ENCODE measurements at regions of chr3 and their contacts with region 1.

Region 1: DNA sequence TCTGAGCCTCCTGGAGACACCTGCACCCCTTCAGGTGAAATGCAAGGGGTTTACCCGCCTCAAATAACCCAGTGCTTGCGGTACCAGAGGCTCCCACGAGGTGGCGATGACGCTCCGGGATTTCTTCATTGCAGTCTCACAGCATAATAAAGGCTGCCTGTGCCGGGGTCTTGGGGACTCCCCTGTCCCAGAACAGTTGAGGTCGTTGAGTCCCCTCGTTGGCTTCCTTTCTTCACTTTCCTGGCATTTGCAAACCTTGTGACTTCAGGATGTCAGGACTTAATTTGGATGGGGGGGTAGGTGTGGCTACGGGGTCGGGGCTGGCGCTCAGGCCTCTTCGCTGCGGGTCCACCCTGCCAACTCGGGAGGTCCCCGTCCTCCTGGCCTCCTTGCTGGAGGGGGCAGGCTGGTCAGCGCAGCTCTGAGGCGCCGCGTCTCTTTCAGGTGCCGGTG is 1.3 kb downstream of the GNAT1 start:
- DNase-seq: peak; percentile 69 to 72
- H3K4me3 ChIP-seq: no peak overlapping the region
- H3K27ac ChIP-seq: no peak overlapping the region
- H3K4me1 ChIP-seq: peaks cover 0 to 7% of the 10 kb centered on the region in 2 donors
- H3K27me3 ChIP-seq: peaks cover 15 to 17% of the 10 kb centered on the region in 2 donors
- CTCF ChIP-seq: peak; percentile 85 to 93 (median 86)
- POLR2A ChIP-seq: no peak

Region 2: GRCh38 chr3:50121416-50122032 is 71.2 kb before region 1 on chr3:
- intact Hi-C with region 1: loop called (anchors 5 kb)
- DNase-seq: peak; percentile 77 to 80
- H3K4me3 ChIP-seq: no peak overlapping the region
- H3K27ac ChIP-seq: no peak overlapping the region
- H3K4me1 ChIP-seq: peaks cover 0 to 3% of the 10 kb centered on the region in 2 donors
- H3K27me3 ChIP-seq: no peaks in the 10 kb centered on the region
- CTCF ChIP-seq: peak; percentile 73 to 86 (median 85)
- POLR2A ChIP-seq: no peak

Region 3: DNA sequence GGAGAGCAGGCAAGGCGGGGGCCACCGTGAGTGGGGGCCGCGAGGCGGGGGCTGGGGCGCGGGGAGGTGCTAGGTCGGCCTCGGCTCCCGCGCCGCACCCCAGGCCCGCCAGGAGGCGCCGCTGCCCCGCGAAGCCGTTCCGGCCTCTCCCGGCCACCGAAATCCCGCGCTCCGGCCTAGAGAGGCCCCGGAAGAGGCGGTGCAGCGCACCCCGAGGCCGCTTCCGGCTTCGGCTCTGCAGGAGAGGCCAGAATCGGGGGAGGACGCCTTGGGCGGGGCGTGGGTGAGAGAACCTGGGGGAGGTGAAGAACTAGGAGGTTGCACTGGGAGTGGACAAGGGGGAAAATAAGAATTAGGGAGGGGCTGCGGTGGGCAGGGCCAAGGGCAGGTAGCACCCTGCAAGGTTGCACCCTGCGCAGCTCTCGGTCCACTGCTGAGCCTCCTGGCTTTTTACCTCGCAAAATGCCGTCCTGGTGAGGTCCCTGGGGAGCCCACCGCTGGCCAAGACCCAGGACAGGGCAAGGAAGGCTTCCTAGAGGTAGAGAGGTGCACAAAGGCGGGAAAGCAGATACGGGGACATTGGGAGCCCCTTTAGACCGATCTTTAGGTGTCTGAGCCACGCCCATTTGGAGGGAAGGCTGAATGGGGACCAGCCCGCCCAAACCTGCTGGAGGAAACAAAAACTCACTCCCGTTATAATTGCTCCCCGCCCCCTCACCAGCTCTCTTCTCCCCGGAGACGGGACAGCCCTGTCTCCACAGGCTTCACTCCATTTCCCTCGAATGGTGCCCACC is 34.9 kb after region 1 on chr3:
- intact Hi-C with region 1: loop called (anchors 5 kb)
- DNase-seq: peak; percentile 89 to 93
- H3K4me3 ChIP-seq: peak overlapping the region; percentile 35 to 60
- H3K27ac ChIP-seq: peak overlapping the region; percentile 78 to 82
- H3K4me1 ChIP-seq: no peaks in the 10 kb centered on the region
- H3K27me3 ChIP-seq: no peaks in the 10 kb centered on the region
- CTCF ChIP-seq: peak; percentile 85 to 98 (median 96)
- POLR2A ChIP-seq: peak; percentile 37 to 51

Region 4: GRCh38 chr3:50248381-50248780 is 55.7 kb after region 1 on chr3:
- intact Hi-C with region 1: no loop called
- DNase-seq: no peak
- H3K4me3 ChIP-seq: no peak overlapping the region
- H3K27ac ChIP-seq: peak overlapping the region; percentile 46 to 99
- H3K4me1 ChIP-seq: peaks cover 0 to 42% of the 10 kb centered on the region in 2 donors
- H3K27me3 ChIP-seq: no peaks in the 10 kb centered on the region
- CTCF ChIP-seq: no peak
- POLR2A ChIP-seq: peak in 1 of 2 donors; percentile 8

Region 5: DNA sequence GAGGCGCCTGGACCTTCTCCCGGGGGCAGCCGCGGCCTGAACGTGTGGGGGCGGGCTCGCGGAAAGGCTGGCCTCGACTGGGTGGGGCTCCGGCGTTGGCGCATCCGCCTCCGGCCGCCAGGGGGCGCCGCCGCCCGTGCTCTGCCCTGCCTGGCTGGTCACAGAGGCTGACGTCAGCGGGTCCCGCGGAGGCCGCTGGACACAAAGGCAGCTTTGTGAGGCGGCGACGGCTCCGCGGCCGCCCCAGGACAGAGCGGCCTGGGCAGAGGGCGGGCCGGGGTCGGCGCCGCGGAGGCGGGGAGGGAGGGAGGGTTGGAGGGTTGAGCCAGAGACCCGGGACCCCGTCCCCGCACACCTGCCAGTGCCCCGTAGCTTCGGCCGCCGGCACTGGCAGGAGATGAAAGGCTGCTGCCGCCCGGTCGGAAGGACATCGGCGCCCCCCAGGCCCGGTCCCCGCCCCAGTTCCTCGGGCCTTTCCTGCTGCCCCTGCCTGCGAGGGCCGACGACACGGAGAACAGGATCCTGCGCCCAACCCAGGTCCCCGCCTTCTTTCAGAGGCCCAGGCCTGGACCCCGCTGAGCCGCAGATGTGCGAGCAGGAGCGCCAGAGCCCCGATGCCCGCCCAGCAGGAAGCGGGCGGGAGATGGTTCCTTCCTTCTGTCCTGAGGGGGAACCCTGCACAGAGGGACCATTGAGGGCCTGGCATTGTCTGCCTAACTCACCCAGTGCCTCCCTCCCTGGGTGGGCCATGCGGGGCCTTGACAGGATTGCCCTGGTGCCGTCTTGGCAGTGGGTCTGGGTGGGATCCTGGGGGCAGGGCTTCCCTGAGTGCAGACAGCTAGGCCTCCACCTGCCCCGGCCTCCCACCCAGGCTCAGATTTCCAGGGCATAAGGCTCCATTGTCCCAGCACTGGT is 67.6 kb after region 1 on chr3:
- intact Hi-C with region 1: no loop called
- DNase-seq: peak; percentile 92 to 95
- H3K4me3 ChIP-seq: peak overlapping the region; percentile 48 to 51
- H3K27ac ChIP-seq: peak overlapping the region; percentile 97 to 99
- H3K4me1 ChIP-seq: peaks cover 4 to 21% of the 10 kb centered on the region in 2 donors
- H3K27me3 ChIP-seq: no peaks in the 10 kb centered on the region
- CTCF ChIP-seq: peak; percentile 79 to 100 (median 99)
- POLR2A ChIP-seq: peak; percentile 77 to 94

Region 6: DNA sequence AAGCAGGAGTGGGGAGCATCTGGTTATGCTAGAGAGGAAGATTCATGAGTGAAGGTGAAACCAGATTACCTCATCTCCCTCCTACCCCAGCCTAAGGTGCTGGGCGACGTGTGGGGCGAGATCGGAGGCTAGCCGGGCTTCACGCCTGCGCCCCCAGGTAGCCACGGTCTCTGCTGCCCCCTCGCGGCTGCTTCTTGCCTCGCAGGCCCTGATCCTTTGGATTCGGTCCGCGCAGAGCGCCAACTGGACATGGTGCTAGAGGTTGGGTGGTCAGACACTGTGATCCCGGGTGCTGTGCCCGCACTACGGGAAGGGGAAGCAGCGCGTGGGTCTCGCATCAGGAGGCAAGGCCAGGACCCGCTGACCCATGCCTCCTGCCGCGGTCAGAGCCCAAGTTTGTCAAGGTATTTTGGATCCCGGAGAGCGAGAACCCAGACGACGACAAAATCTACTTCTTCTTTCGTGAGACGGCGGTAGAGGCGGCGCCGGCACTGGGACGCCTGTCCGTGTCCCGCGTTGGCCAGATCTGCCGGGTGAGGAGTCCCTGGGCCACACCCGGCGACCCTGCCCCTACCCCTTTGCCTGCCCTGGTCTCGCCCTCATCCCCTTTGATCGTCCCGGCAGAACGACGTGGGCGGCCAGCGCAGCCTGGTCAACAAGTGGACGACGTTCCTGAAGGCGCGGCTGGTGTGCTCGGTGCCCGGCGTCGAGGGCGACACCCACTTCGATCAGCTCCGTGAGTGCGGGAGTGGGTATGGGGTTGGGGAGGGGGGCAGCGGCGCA is 80.4 kb after region 1 on chr3:
- intact Hi-C with region 1: loop called (anchors 5 kb)
- DNase-seq: peak; percentile 87 to 90
- H3K4me3 ChIP-seq: peak overlapping the region; percentile 2 to 5
- H3K27ac ChIP-seq: peak overlapping the region; percentile 97 to 99
- H3K4me1 ChIP-seq: peaks cover 0 to 24% of the 10 kb centered on the region in 2 donors
- H3K27me3 ChIP-seq: no peaks in the 10 kb centered on the region
- CTCF ChIP-seq: peak; percentile 96 to 100 (median 98)
- POLR2A ChIP-seq: peak in 1 of 2 donors; percentile 47

Region 7: DNA sequence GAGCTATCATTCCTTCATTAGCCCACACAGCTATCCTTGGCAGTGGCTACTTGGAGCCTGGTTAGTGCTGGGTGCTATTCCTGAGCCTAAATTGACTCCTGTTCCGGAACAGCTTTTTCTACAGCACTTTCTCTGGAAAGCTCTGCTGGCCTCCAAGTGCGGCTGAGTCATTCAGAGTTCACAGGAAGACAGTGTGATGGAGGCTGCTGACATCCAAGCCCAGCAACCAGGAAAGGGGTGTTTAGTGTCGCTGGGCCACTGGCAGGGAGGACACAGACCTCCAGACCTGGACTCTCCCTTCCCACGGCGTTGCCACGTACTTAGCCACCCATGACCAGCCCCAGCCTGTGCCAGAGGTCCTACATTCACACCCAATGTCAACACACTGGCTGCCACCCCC is 282.0 kb after region 1 on chr3:
- intact Hi-C with region 1: no loop called
- DNase-seq: no peak
- H3K4me3 ChIP-seq: no peak overlapping the region
- H3K27ac ChIP-seq: no peak overlapping the region
- H3K4me1 ChIP-seq: no peaks in the 10 kb centered on the region
- H3K27me3 ChIP-seq: no peaks in the 10 kb centered on the region
- CTCF ChIP-seq: no peak
- POLR2A ChIP-seq: no peak

Measured in uterus (tissue), 4 donors.